Posterior vena cava (tissue), 2 donors: ENCODE measurements at regions of chr10 and their contacts with region 1.

Region 1: GRCh38 chr10:80498833-80499741 is 38.6 kb upstream of the SH2D4B start:
- DNase-seq: peak; percentile 98

Region 2: GRCh38 chr10:80453701-80454513 is 45.2 kb before region 1 on chr10 and contains the start of gene TSPAN14:
- intact Hi-C with region 1: loop called (anchors 2 to 5 kb)
- DNase-seq: peak; percentile 94
- total RNA-seq, gene TSPAN14: 56.6 to 57.4 TPM

Region 3: DNA sequence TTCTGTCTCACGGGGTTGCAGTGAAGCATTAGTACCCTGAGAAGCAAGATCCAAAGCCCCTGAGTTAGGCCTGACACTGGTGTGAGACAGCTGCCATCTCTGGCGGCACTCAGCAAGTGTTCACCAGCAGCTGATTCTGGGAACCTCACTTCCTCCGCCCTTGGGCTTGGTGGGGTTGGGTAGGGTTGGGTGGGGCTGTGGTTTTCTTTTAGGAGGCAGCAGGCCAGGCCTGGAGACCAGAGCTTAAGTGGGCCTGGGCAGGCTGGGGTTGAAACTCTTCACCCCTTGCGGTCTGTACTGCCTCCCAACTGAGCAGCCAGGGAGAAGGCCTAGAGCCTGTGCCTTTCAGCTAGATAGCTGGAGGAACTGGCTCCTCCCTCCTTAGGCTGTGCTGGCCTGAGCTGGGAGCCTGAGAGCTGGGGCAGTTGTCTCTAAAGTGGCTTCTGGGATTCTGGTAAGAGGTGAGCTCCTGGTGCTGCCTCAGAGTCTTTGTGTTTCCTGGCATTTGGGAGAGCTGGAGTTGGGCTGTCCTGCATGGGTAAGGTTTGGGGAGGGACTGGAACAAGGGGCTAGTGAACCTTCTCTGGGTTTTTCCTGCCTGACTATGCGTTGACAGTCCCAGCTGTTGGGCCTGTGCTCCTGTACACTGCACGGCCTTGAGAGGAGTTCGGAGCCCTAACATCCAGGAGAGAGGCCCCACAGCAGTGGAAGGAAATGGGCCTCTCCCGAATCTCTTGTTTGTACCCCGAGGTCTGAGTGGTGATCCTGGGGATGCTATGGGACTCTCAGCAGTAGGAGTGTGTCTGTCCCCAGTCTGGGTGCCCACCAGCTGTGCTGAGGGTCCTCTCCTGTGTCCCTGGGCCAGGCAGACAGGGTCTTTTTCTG is 39.8 kb before region 1 on chr10:
- intact Hi-C with region 1: loop called (anchors 2 to 5 kb)
- DNase-seq: peak; percentile 91